ENCODE measurements at regions of chr12 and their contacts with region 1.

Region 1: DNA sequence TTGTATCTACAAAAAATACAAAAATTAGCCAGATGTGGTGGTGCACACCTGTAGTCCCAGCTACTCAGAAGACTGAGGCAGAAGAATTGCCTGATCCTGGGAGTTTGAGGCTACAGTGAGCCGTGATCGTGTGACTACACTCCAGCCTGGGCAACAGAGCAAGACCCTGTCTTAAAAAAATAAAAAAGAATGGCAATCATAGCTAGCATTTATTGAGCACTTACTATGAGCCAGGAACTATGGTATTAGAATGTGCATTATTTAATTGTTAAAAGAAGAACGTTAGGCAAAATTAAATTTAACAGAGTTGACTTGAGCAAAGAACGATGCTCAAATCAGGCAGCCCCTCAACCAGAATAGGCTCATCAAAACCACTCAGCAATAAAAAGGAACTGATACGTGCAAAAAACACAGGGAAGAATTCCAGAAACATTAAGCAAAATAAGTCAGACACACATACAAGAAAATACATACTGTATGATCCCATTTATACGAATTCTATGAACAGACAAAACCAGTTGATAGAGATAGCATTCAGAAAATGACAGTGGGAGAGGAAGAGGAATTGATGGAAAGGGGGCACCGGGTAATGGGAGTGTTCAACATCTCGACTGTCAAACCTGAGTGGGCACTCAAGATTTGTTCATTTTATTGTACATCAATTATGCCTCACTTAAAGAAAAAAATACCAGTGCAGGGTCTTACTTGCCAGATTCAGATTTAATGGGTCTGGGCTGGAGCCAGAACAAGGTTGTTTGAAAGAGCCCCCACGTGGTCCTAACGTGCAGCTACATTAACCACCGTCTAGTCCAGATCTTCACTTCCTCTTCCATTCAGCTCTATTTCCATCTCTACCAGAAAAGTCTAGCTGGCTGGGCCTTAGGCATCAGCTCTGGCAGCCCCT is 8.0 kb downstream of the SCNN1A start:
- DNase-seq: no peak
- H3K4me3 ChIP-seq: no peak overlapping the region
- H3K27ac ChIP-seq: no peak overlapping the region
- H3K4me1 ChIP-seq: peaks cover 10 to 23% (median 14%) of the 10 kb centered on the region in 4 experiments
- H3K27me3 ChIP-seq: no peaks in the 10 kb centered on the region
- CTCF ChIP-seq: 0 out of 4 replicates have a peak, but pooled peaks of 1 of the 3 experiments have one; percentile 3
- EP300 ChIP-seq: no peak
- POLR2A ChIP-seq: no peak
- RAD21 ChIP-seq: peak in 1 of 2 experiments; percentile 9; a peak in 1 of 4 replicates

Region 2: GRCh38 chr12:6224550-6224949 is 142.8 kb before region 1 on chr12:
- CTCF ChIA-PET with region 1: no interaction called
- POLR2A ChIA-PET with region 1: no interaction called
- DNase-seq: no peak
- H3K4me3 ChIP-seq: no peak overlapping the region
- H3K27ac ChIP-seq: no peak overlapping the region
- H3K4me1 ChIP-seq: peaks cover 0 to 4% (median 2%) of the 10 kb centered on the region in 4 experiments; a peak in 4 of 7 replicates
- H3K27me3 ChIP-seq: no peaks in the 10 kb centered on the region
- CTCF ChIP-seq: no peak
- EP300 ChIP-seq: no peak
- POLR2A ChIP-seq: no peak
- RAD21 ChIP-seq: no peak

Region 3: DNA sequence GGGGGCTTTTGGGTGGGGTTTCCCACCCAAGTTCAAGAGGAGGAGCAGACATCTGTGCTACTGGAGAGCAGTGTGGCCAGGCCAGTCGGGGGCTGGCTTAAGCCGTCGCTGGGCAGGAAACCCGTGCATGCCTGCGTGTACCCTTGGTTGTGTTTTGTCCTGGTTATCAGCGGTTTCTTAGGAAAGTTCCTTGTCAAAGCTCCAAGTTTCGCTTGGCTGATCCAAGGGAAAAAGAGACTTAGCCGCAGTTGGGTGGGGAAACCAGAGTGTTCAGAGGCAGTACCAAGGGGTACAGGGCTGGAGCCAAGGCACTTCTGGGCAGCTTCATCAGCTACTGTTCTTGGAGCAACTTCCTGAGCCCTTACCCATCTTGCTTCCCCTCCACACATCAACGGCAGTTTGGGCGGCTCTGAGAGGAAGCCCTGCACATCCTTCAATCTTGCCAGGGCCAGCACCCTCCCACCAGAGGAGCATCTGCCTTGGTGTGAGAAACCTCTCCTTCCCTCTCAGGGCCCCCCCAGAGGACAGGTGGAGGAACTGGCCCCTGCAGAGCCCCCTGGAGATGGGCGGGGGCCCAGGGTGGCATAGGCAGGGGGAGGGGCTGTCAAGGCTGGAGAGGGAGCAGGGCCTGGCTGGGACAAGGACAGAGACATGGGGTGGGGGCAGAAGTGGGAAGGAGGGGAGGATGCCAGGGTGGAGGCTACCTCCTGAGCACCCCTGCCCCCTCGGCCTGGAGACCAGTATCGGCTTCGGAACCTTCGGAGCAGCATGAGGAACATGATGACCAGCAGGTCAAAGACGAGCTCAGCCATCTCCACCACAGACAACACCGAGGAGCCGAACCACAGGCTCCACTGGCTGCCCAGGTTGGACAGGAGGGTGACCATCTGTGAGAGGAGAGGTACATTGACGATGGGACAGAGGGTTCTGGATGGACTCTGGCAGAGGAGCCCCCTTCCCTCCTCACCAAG is 19.7 kb before region 1 on chr12:
- CTCF ChIA-PET with region 1: interaction called, 10 read pairs
- POLR2A ChIA-PET with region 1: interaction called, 259 read pairs
- DNase-seq: no peak
- H3K4me3 ChIP-seq: no peak overlapping the region
- H3K27ac ChIP-seq: no peak overlapping the region
- H3K4me1 ChIP-seq: peaks cover under 1 to 9% (median 7%) of the 10 kb centered on the region in 4 experiments; a peak in 4 of 7 replicates
- H3K27me3 ChIP-seq: no peaks in the 10 kb centered on the region
- CTCF ChIP-seq: no peak
- EP300 ChIP-seq: no peak
- POLR2A ChIP-seq: no peak
- RAD21 ChIP-seq: no peak